ENCODE measurements at regions of chr14 and their contacts with region 1.

Region 1: DNA sequence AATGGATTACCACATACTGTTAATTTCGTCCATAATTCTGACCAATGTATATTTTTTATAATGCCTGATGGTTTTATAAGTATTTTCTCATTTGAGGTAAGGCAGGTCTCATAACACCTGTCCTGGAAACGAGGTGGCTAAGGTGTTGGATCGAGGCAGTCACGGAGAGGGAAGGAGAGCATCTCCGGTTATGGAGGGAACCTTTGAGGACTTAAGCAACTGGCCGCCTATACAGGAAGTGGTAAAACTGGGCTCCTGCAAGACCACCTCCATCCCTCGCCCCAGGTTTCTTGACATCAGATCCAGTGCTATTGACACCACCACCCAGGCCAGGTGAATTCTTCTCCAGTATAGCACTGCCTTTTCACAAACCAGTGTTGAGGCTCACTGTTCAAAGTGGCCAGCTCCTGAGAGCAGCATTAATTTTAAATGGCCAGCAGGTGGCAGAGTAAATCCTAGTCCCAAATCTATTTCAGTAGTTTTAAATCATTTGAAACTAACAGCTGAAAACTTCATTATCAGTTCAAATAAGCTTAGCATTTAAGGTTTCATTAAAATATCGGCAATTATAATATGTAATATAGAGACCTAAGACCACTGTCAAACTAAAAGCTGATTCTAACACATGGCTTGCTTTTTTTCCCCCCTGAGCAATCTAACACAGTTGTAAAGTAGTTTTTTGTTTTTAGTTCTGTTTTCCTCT is 100.8 kb downstream of the PPM1A start:
- DNase-seq: no peak
- ATAC-seq: no peak
- H3K4me3 Mint-ChIP-seq: no peak overlapping the region
- H3K27ac Mint-ChIP-seq: no peak overlapping the region
- H3K4me1 Mint-ChIP-seq: peaks cover 3% of the 10 kb centered on the region
- H3K27me3 Mint-ChIP-seq: peaks cover 9% of the 10 kb centered on the region
- CTCF ChIP-seq: no peak

Region 2: DNA sequence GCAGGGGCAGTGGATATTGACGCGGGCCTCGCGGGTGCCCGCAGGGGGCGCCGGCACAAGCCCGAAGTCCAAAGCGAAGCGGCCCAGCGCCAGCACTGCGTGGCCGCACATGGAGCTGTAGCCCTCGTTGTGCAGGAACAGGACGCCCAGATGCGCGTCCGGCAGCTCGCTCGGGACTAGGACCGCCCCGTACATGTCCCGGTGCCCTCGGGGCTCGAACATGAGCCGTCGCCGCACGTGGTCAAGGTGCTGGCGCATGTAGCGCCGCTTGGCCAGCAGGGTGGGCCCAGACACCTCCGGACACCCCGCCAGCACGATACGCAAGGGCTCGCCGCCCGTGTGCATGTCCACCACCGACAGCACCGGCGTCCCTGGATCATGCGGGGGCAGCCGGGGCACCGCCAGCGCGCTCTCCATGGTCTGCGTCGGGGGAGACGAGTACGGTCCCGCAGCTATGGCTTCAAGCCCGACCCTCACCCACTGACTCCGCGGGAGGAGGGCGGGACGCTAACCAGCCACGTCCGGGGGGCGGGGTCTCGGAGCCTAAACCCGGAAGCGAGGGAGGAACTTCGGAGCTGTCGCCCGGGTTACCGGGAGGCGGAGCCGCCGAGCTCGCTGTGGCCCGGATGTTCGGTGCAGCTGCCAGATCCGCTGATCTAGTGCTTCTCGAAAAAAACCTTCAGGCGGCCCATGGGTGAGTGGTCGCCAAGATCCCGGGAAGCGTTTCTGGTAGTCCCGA is 865.7 kb before region 1 on chr14 and contains the starts of genes JKAMP and L3HYPDH:
- CTCF ChIA-PET with region 1: no interaction called
- POLR2A ChIA-PET with region 1: no interaction called
- intact Hi-C with region 1: no loop called
- DNase-seq: peak; percentile 96
- ATAC-seq: peak; percentile 92
- H3K4me3 Mint-ChIP-seq: peak within 1 kb of the TSS; percentile 98
- H3K27ac Mint-ChIP-seq: peak within 1 kb of the TSS; percentile 96
- H3K4me1 Mint-ChIP-seq: peaks cover 52% of the 10 kb centered on the region
- H3K27me3 Mint-ChIP-seq: no peaks in the 10 kb centered on the region
- CTCF ChIP-seq: no peak
- total RNA-seq, gene JKAMP: 18.1 and 28.8 TPM in 2 replicates
- total RNA-seq, gene L3HYPDH: 22.1 and 30.2 TPM in 2 replicates

Region 3: DNA sequence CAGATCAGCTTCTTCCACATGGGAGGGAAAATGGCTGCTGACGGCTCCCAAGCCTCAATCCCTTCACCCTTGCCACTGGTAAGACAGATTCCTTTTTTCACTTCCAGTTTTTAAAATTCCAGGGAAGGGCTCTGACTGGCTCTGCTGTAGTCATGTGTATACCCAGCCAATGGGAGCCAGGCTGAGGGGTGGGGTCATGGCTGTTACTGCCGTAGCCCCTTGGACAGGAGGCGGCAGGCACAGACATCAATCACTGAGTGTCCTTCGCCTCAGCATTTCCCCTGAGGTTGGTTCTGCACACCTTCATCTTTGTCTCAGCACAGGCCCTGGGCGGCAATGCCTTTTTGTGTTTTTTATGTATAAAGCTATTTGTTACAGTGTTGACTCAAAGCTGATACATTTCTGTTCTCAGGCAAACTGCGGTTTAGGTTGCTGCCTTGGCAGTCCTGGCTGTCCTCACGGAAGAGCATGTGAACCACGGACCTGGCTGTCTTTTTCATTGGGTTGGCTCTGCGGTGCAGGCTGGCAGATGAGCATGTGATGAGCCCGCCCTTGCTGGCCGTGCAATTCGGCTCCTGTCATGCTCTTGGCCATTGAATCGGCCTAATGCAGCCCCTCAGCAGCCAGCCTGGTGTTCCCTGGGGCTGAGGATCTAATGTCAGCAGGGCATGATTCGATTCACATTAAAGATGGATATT is 26.5 kb before region 1 on chr14:
- CTCF ChIA-PET with region 1: no interaction called
- POLR2A ChIA-PET with region 1: no interaction called
- intact Hi-C with region 1: no loop called
- DNase-seq: no peak
- ATAC-seq: no peak
- H3K4me3 Mint-ChIP-seq: no peak overlapping the region
- H3K27ac Mint-ChIP-seq: no peak overlapping the region
- H3K4me1 Mint-ChIP-seq: peaks cover 10% of the 10 kb centered on the region
- H3K27me3 Mint-ChIP-seq: peaks cover 4% of the 10 kb centered on the region
- CTCF ChIP-seq: no peak

Region 4: DNA sequence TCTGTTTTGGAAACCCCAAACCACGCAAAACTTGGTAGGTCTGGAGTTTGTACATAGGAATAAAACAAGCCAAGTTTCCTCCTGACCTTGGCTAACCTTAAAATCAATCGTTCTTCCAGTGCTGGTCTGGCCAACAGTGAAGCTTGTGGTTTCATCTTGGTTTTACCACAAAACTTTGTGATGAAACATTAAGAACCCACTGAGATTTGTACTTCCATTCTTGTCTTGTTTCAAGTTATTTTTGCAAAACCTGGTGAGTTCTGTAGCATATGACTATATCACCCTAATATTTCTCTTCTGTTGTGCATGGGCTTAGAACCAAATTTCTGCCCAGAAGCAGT is 273.1 kb after region 1 on chr14:
- CTCF ChIA-PET with region 1: interaction called, 3 read pairs
- POLR2A ChIA-PET with region 1: no interaction called
- intact Hi-C with region 1: loop called (anchors 1 kb)
- DNase-seq: no peak
- ATAC-seq: no peak
- H3K4me3 Mint-ChIP-seq: no peak overlapping the region
- H3K27ac Mint-ChIP-seq: no peak overlapping the region
- H3K4me1 Mint-ChIP-seq: peaks cover 5% of the 10 kb centered on the region
- H3K27me3 Mint-ChIP-seq: peaks cover 17% of the 10 kb centered on the region
- CTCF ChIP-seq: no peak

Region 5: DNA sequence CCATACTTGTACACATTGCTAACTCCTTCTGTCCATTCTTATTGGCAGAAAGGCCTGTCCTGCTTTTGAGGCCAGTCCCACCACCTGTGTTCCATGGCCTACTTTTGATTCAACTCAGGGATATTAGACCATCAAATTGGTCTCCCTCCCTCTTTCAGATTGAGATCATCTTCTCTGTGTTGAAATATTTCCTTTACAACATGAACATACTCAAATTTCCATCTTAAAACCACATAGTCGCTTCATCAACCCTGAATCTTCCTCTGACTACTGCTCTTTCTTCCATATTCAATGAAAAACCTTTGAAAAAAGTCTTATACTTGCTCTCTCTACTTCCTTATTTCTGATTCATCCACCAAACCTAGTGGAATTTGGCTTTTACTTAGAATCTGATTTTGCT is 596.2 kb after region 1 on chr14:
- CTCF ChIA-PET with region 1: no interaction called
- POLR2A ChIA-PET with region 1: no interaction called
- intact Hi-C with region 1: no loop called
- DNase-seq: no peak
- ATAC-seq: no peak
- H3K4me3 Mint-ChIP-seq: no peak overlapping the region
- H3K27ac Mint-ChIP-seq: no peak overlapping the region
- H3K4me1 Mint-ChIP-seq: no peaks in the 10 kb centered on the region
- H3K27me3 Mint-ChIP-seq: no peaks in the 10 kb centered on the region
- CTCF ChIP-seq: no peak

Region 6: GRCh38 chr14:61252369-61253063 is 902.7 kb after region 1 on chr14:
- CTCF ChIA-PET with region 1: interaction called, 55 read pairs
- POLR2A ChIA-PET with region 1: no interaction called
- intact Hi-C with region 1: no loop called
- DNase-seq: no peak
- ATAC-seq: peak; percentile 85
- H3K4me3 Mint-ChIP-seq: no peak overlapping the region
- H3K27ac Mint-ChIP-seq: no peak overlapping the region
- H3K4me1 Mint-ChIP-seq: peaks cover 9% of the 10 kb centered on the region
- H3K27me3 Mint-ChIP-seq: peaks cover 5% of the 10 kb centered on the region
- CTCF ChIP-seq: peak; percentile 43

Region 7: DNA sequence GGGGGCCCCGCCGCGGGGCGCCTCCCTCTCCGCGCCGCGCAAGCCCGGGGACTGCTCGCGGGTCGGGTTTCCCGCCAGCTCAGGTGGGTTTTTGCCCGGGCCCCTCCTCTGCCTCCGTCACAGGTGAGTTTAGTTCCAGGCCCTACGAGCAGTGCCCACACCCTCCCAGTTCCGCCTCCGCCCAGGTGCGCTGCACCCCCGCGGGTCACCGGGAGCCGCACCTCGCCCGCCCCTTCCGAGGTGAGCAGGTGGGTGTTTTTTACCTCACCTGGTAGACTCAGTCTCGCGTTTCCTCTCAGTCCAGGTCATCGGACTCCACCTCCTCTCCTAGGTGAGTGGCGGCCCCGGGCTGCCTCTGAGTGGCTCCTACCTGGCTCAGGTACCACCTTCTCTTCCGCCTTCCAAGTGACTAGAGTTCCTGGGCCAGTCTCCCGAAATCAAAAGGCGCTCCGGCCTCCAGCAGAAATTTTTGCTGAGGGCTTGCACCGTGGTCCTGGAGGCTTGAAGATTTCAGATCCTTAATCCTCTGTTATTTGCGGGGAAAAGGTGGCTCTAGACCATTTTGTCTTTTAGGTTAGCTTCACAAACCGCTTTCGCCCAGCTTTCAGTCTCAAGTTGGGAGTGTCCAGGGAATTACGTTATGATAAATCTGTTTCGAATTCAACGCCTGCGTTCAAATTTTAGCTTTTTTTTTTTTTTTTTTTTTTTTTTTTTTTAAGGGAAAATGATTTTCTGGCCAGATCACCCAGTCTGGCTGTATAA is 931.6 kb after region 1 on chr14 and contains the start of gene TMEM30B:
- CTCF ChIA-PET with region 1: interaction called, 4 read pairs
- POLR2A ChIA-PET with region 1: no interaction called
- intact Hi-C with region 1: loop called (anchors 1 kb)
- DNase-seq: no peak
- ATAC-seq: no peak
- H3K4me3 Mint-ChIP-seq: peak within 1 kb of the TSS; percentile 80
- H3K27ac Mint-ChIP-seq: no peak within 1 kb of the TSS
- H3K4me1 Mint-ChIP-seq: peaks cover 13% of the 10 kb centered on the region
- H3K27me3 Mint-ChIP-seq: peaks cover 38% of the 10 kb centered on the region
- CTCF ChIP-seq: no peak
- total RNA-seq, gene TMEM30B: not detected in 2 replicates